Panc1 (cell line): ENCODE measurements at regions of chr19 and their contacts with region 1.

Region 1: DNA sequence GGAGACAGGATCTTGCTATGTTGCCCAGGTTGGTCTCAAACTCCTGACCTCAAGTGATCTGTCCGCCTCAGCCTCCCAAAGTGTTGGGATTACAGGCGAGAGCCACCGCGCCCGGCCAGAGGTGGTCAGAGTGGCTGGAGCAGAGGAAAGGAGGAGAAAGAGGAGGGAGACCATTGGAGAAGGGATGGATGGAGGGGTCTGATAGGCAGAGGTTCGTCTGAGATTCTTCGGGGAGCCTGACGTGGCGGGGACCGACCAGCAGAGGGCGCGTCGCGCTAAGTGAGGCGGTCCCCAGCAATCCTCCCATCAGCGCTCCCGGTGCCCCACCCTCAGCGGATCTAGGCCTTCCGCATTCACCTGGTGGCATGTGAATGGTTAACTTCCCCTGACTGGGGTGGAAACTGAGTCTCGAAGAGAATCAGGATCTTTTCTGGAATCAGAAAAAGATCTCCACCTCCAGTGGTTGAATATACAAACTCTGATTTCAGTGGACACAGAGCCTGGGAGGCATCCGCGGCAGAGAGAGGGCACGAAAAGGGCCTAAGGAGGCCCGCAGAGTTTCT is 8.8 kb downstream of the GTPBP3 start:
- DNase-seq: no peak
- ATAC-seq: peak; percentile 93
- H3K4me3 ChIP-seq: no peak overlapping the region
- H3K27ac ChIP-seq: no peak overlapping the region
- H3K4me1 ChIP-seq: no peaks in the 10 kb centered on the region
- H3K27me3 ChIP-seq: no peaks in the 10 kb centered on the region
- CTCF ChIP-seq: peak; percentile 91

Region 2: GRCh38 chr19:16441661-16442162 is 904.5 kb before region 1 on chr19:
- CTCF ChIA-PET with region 1: no interaction called
- POLR2A ChIA-PET with region 1: interaction called, 11 read pairs
- in situ Hi-C with region 1: no loop called
- intact Hi-C with region 1: no loop called
- DNase-seq: no peak
- ATAC-seq: peak; percentile 71; the same call in 1 of the 2 replicates
- H3K4me3 ChIP-seq: no peak overlapping the region
- H3K27ac ChIP-seq: no peak overlapping the region
- H3K4me1 ChIP-seq: peaks cover under 1% of the 10 kb centered on the region
- H3K27me3 ChIP-seq: no peaks in the 10 kb centered on the region
- CTCF ChIP-seq: peak; percentile 70

Region 3: DNA sequence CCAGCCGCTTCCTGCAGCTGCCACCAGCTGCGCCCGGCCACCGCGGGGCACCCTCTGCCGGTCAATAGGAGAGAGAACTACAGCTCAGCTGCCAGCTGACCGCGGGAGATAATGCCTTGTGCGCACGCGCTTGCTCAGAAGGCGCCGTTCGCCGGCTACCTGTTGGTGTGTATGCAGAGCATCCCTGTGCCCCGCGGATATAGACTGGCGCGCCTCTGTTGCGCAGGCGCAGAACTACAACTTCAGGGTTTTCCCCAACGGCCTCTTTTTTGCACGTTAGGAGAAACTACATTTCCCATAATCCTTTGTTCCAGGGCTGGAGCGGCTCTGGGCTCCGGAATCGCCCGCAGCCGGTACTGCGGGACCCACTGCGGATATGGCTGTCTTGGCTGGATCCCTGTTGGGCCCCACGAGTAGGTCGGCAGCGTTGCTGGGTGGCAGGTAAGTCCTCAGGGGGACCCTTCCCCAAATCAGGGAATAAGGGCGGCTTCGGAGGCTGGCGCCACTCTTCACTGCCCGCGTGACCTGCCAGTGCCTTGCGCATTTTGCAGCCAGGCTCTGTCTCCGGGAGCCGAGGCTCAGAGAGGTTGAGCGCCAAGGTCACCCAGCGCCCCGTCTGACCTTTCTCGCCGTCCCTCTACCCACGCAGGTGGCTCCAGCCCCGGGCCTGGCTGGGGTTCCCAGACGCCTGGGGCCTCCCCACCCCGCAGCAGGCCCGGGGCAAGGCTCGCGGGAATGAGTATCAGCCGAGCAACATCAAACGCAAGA is 40.5 kb before region 1 on chr19 and contains the start of gene MRPL34:
- CTCF ChIA-PET with region 1: interaction called, 11 read pairs
- POLR2A ChIA-PET with region 1: no interaction called
- in situ Hi-C with region 1: no loop called
- intact Hi-C with region 1: no loop called
- DNase-seq: peak; percentile 96
- ATAC-seq: peak; percentile 84
- H3K4me3 ChIP-seq: peak within 1 kb of the TSS; percentile 60 to 77
- H3K27ac ChIP-seq: peak within 1 kb of the TSS; percentile 92
- H3K4me1 ChIP-seq: peaks cover 34% of the 10 kb centered on the region
- H3K27me3 ChIP-seq: no peaks in the 10 kb centered on the region
- CTCF ChIP-seq: peak; percentile 85
- total RNA-seq, gene MRPL34: 87.7 TPM

Region 4: GRCh38 chr19:17378271-17378670 is 32.1 kb after region 1 on chr19:
- CTCF ChIA-PET with region 1: interaction called, 4 read pairs
- POLR2A ChIA-PET with region 1: interaction called, 14 read pairs
- in situ Hi-C with region 1: no loop called
- intact Hi-C with region 1: no loop called
- DNase-seq: no peak
- ATAC-seq: no peak
- H3K4me3 ChIP-seq: no peak overlapping the region
- H3K27ac ChIP-seq: no peak overlapping the region
- H3K4me1 ChIP-seq: peaks cover 4% of the 10 kb centered on the region; the same call in 1 of the 2 replicates
- H3K27me3 ChIP-seq: no peaks in the 10 kb centered on the region
- CTCF ChIP-seq: no peak

Region 5: DNA sequence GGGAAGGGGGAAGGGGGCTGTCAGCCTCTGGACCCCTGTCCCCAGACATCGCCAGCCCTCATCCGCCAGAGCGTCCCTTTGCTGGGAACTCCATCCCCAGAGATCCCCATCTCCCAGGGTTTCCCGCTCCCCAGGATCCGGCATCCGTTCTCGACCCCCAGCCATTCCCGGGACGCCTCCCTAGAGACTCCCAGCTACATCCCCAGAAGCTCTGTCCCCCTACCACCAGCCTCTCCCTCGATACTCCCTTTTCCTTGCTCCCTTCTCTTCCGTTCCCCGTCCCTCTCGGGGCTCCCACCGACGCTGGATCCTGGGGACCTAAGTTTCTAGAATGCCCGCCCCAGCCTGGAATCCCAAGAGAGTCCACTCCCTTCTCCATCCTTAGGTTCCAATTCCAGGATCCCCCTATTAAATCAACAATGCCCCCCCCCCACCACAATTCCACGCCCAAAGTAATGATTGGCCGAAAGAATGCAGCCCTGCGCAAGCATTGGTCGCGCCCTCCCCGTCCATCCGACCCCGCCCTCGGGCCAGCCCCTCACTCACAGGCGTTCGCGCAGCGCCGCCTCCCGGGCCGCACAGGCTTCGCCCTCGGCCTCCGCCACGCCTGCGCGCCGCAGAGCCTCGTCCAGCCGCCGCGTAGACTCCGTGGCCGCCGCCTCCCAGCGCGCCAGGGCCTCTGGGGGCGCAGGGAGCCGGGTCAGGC is 44.6 kb after region 1 on chr19:
- CTCF ChIA-PET with region 1: interaction called, 5 read pairs
- POLR2A ChIA-PET with region 1: interaction called, 8 read pairs
- in situ Hi-C with region 1: no loop called
- intact Hi-C with region 1: loop called (anchors 2 kb)
- DNase-seq: no peak
- ATAC-seq: peak; percentile 99
- H3K4me3 ChIP-seq: peak overlapping the region; percentile 63 to 75
- H3K27ac ChIP-seq: no peak overlapping the region
- H3K4me1 ChIP-seq: peaks cover 5% of the 10 kb centered on the region
- H3K27me3 ChIP-seq: no peaks in the 10 kb centered on the region
- CTCF ChIP-seq: peak; percentile 86

Region 6: DNA sequence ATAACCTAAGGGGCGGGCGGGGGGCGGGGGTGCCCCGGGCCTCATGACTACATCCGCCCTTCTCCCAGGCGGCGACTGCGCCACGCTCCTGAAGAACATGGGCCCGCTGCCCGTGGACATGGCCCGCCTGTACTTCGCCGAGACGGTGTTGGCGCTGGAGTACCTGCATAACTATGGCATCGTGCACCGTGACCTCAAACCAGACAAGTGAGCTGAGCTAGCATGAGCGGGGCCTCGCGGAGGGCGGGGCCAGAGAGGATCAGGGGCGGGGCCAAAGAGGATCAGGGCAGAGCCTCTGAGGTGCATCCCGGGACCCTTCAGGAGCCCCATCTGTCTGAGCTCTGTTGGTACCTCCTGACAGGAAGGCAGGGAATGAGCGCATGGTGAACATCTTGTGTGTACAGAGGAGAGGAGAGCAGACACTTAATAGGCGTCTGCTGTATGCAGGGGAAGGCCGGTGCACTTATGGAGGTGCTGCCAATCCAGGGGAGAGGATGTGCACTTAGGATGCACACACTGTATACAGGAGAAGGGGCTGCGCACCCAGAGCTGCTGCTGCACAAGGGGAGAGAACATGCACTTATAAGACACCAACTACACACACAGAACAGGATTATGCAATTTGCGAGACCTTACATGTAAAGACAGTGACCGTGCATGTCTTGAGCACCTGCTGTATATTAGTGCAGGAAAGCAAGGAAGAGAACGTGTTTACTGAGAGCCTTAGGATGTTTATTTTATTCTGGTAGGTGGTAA is 785.8 kb after region 1 on chr19:
- CTCF ChIA-PET with region 1: interaction called, 13 read pairs
- POLR2A ChIA-PET with region 1: no interaction called
- in situ Hi-C with region 1: no loop called
- intact Hi-C with region 1: no loop called
- DNase-seq: no peak
- ATAC-seq: peak; percentile 80; the same call in 1 of the 2 replicates
- H3K4me3 ChIP-seq: no peak overlapping the region
- H3K27ac ChIP-seq: no peak overlapping the region
- H3K4me1 ChIP-seq: no peaks in the 10 kb centered on the region
- H3K27me3 ChIP-seq: no peaks in the 10 kb centered on the region
- CTCF ChIP-seq: no peak